ENCODE measurements at regions of chr1 and their contacts with region 1.

Region 1: GRCh38 chr1:229258031-229258756 is 12.7 kb upstream of the RAB4A start:
- DNase-seq: peak; percentile 45 to 84 (median 58)
- ATAC-seq: no peak
- H3K4me3 ChIP-seq: no peak overlapping the region
- H3K4me3 Mint-ChIP-seq: peak overlapping the region; percentile 39
- H3K27ac ChIP-seq: no peak overlapping the region
- H3K27ac Mint-ChIP-seq: peak overlapping the region; percentile 54
- H3K4me1 ChIP-seq: peaks cover 32% of the 10 kb centered on the region
- H3K4me1 Mint-ChIP-seq: peaks cover 36% of the 10 kb centered on the region
- H3K27me3 ChIP-seq: no peaks in the 10 kb centered on the region
- H3K27me3 Mint-ChIP-seq: no peaks in the 10 kb centered on the region
- CTCF ChIP-seq: peak; percentile 97

Region 2: DNA sequence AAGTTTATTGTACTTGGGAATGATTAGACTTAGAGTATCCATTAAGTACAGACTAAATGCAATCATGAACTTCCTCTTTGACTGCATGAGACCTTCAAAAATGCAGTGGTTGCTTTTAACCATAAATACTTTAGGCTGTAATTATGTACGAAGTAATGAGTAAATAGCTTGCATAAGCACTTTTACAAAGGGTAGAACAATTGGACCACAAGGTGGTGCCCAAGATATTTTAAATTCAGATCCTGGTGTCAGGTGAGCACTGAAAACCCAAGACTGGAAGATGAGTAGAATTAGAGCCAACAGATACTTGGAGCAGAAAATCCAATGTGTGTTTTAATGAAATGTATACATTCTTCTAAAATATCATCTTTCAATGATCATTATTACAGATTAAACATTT is 566.3 kb before region 1 on chr1:
- CTCF ChIA-PET with region 1: interaction called, 6 read pairs
- POLR2A ChIA-PET with region 1: no interaction called
- intact Hi-C with region 1: loop called (anchors 1 to 2 kb)
- DNase-seq: peak in 6 of 14 experiments; percentile 3 to 73 (median 55)
- ATAC-seq: peak; percentile 51
- H3K4me3 ChIP-seq: no peak overlapping the region
- H3K4me3 Mint-ChIP-seq: no peak overlapping the region
- H3K27ac ChIP-seq: no peak overlapping the region
- H3K27ac Mint-ChIP-seq: no peak overlapping the region
- H3K4me1 ChIP-seq: peaks cover 10% of the 10 kb centered on the region
- H3K4me1 Mint-ChIP-seq: peaks cover 13% of the 10 kb centered on the region
- H3K27me3 ChIP-seq: no peaks in the 10 kb centered on the region
- H3K27me3 Mint-ChIP-seq: no peaks in the 10 kb centered on the region
- CTCF ChIP-seq: peak; percentile 48

Region 3: GRCh38 chr1:229127301-229127700 is 130.9 kb before region 1 on chr1:
- CTCF ChIA-PET with region 1: no interaction called
- POLR2A ChIA-PET with region 1: interaction called, 11 read pairs
- intact Hi-C with region 1: no loop called
- DNase-seq: peak in 3 of 14 experiments; percentile 44 to 49 (median 44)
- ATAC-seq: no peak
- H3K4me3 ChIP-seq: no peak overlapping the region
- H3K4me3 Mint-ChIP-seq: peak overlapping the region; percentile 60
- H3K27ac ChIP-seq: no peak overlapping the region
- H3K27ac Mint-ChIP-seq: peak overlapping the region; percentile 57
- H3K4me1 ChIP-seq: peaks cover 41% of the 10 kb centered on the region
- H3K4me1 Mint-ChIP-seq: peaks cover 58% of the 10 kb centered on the region
- H3K27me3 ChIP-seq: no peaks in the 10 kb centered on the region
- H3K27me3 Mint-ChIP-seq: no peaks in the 10 kb centered on the region
- CTCF ChIP-seq: no peak

Region 4: GRCh38 chr1:229270547-229271447 is 12.6 kb after region 1 on chr1 and contains the start of gene RAB4A:
- CTCF ChIA-PET with region 1: interaction called, 4 read pairs
- POLR2A ChIA-PET with region 1: interaction called, 16 read pairs
- intact Hi-C with region 1: no loop called
- DNase-seq: peak; percentile 38 to 90 (median 70)
- ATAC-seq: peak; percentile 87
- H3K4me3 ChIP-seq: peak within 1 kb of the TSS; percentile 80
- H3K4me3 Mint-ChIP-seq: peak within 1 kb of the TSS; percentile 99
- H3K27ac ChIP-seq: peak within 1 kb of the TSS in 1 of 2 donors; percentile 41
- H3K27ac Mint-ChIP-seq: peak within 1 kb of the TSS; percentile 77
- H3K4me1 ChIP-seq: peaks cover 34% of the 10 kb centered on the region
- H3K4me1 Mint-ChIP-seq: peaks cover 35% of the 10 kb centered on the region
- H3K27me3 ChIP-seq: no peaks in the 10 kb centered on the region
- H3K27me3 Mint-ChIP-seq: no peaks in the 10 kb centered on the region
- CTCF ChIP-seq: no peak
- total RNA-seq, gene RAB4A: 26.7 to 28.7 TPM

Region 5: GRCh38 chr1:229479660-229480399 is 221.6 kb after region 1 on chr1:
- CTCF ChIA-PET with region 1: interaction called, 20 read pairs
- POLR2A ChIA-PET with region 1: interaction called, 6 read pairs
- intact Hi-C with region 1: loop called (anchors 1 kb)
- DNase-seq: no peak
- ATAC-seq: no peak
- H3K4me3 ChIP-seq: no peak overlapping the region
- H3K4me3 Mint-ChIP-seq: no peak overlapping the region
- H3K27ac ChIP-seq: no peak overlapping the region
- H3K27ac Mint-ChIP-seq: no peak overlapping the region
- H3K4me1 ChIP-seq: no peaks in the 10 kb centered on the region
- H3K4me1 Mint-ChIP-seq: peaks cover 10% of the 10 kb centered on the region
- H3K27me3 ChIP-seq: no peaks in the 10 kb centered on the region
- H3K27me3 Mint-ChIP-seq: no peaks in the 10 kb centered on the region
- CTCF ChIP-seq: no peak

Region 6: GRCh38 chr1:229514578-229515275 is 256.5 kb after region 1 on chr1:
- CTCF ChIA-PET with region 1: interaction called, 8 read pairs
- POLR2A ChIA-PET with region 1: interaction called, 7 read pairs
- intact Hi-C with region 1: loop called (anchors 1 kb)
- DNase-seq: peak; percentile 35 to 85 (median 52)
- ATAC-seq: peak; percentile 100
- H3K4me3 ChIP-seq: no peak overlapping the region
- H3K4me3 Mint-ChIP-seq: no peak overlapping the region
- H3K27ac ChIP-seq: no peak overlapping the region
- H3K27ac Mint-ChIP-seq: peak overlapping the region; percentile 45
- H3K4me1 ChIP-seq: no peaks in the 10 kb centered on the region
- H3K4me1 Mint-ChIP-seq: peaks cover 7% of the 10 kb centered on the region
- H3K27me3 ChIP-seq: no peaks in the 10 kb centered on the region
- H3K27me3 Mint-ChIP-seq: no peaks in the 10 kb centered on the region
- CTCF ChIP-seq: peak; percentile 80

Region 7: DNA sequence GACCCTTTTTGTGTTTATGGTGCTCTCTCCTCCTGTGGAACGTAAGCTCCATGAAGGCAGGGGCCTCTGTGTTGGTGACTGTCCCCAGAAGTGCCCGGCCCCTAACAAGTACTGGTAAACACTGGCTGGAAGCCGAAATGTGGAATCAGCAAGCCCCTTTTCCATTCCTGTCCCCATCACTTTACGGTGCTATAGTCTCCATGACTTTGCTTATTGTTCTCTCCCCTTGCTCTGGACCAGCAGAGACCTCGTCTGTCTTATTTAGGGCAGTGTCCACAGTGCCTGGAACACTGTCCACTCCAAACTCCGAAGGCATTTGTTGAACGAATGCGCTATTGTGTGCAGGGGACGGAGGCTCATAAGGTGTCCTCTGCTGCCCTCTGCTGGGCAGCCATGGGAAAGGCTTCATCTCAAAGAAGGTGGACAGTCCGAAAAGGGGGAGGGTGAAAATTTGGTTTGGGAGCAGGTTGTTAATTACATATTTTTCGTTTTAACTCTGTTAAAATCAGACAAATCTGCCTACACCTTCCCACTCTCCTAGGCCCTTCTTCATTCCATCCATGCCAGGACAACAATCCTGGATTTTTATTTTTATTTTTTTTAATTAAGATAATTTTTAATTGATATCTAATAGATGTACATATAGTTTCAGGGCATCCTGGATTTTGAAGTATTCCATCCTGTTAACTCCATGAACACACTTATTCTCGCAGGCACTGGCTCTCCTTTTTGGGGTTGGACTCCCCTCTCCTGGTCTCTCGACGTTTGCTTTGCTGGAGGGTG is 1052.4 kb after region 1 on chr1:
- CTCF ChIA-PET with region 1: no interaction called
- POLR2A ChIA-PET with region 1: no interaction called
- intact Hi-C with region 1: loop called in 1 of 2 experiments (anchors 1 kb)
- DNase-seq: peak; percentile 23 to 83 (median 57)
- ATAC-seq: peak; percentile 59
- H3K4me3 ChIP-seq: no peak overlapping the region
- H3K4me3 Mint-ChIP-seq: no peak overlapping the region
- H3K27ac ChIP-seq: no peak overlapping the region
- H3K27ac Mint-ChIP-seq: no peak overlapping the region
- H3K4me1 ChIP-seq: peaks cover 5% of the 10 kb centered on the region
- H3K4me1 Mint-ChIP-seq: peaks cover 4% of the 10 kb centered on the region
- H3K27me3 ChIP-seq: no peaks in the 10 kb centered on the region
- H3K27me3 Mint-ChIP-seq: no peaks in the 10 kb centered on the region
- CTCF ChIP-seq: peak; percentile 98

Measured in CD4-positive, alpha-beta T cell (primary cell).